Activated naive CD8-positive, alpha-beta T cell treated with anti-CD3 and anti-CD28 coated beads, Interleukin-2, amount 10 ng/mL, durations not matched to agents 7 days and 5 days (primary cell): ENCODE measurements at regions of chr14 and their contacts with region 1.

Region 1: GRCh38 chr14:22556990-22557623 is 31.9 kb downstream of the DAD1 start:
- DNase-seq: peak; percentile 97
- ATAC-seq: peak; percentile 19
- H3K4me3 Mint-ChIP-seq: peak overlapping the region; percentile 65
- H3K27ac Mint-ChIP-seq: peak overlapping the region; percentile 93
- H3K4me1 Mint-ChIP-seq: peaks cover 84% of the 10 kb centered on the region
- H3K27me3 Mint-ChIP-seq: no peaks in the 10 kb centered on the region

Region 2: DNA sequence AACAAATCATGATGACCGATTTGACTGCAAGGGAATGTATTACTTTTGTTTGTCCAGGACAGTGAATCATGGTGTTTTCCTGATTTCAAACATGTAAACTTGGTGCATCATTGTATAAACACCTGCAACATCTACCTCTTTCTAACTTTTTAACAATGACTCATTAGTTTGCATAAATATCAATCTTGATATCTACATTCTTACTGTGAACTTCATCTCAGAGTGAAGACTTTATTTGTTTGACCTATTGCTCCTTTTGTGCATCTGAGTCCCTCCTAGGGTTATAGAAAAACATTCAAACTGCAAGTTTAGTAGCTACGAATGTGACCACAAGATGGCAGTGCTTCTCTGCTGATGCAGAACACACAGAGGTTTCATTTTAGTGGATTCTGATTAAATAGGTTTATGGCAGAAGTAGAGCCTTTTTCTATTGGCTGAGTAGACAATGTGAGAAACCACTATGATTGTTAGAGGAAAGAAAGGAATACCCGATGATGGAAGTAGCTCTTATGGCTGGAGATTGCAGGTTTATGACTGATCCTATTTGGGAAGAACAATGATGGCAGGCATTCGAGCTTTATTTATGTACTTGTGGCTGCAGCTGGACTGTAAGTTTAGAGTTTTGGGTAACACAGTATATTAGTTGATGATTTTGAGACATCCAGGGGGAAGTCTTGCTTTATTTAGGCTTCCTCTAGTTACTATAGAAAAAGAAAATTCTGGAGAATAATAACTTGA is 639.2 kb before region 1 on chr14:
- POLR2A ChIA-PET with region 1: interaction called, 26 read pairs
- DNase-seq: no peak
- ATAC-seq: peak; percentile 59
- H3K4me3 Mint-ChIP-seq: peak overlapping the region; percentile 77
- H3K27ac Mint-ChIP-seq: peak overlapping the region; percentile 78
- H3K4me1 Mint-ChIP-seq: peaks cover 45% of the 10 kb centered on the region
- H3K27me3 Mint-ChIP-seq: no peaks in the 10 kb centered on the region

Region 3: GRCh38 chr14:22002860-22003309 is 554.2 kb before region 1 on chr14:
- POLR2A ChIA-PET with region 1: interaction called, 26 read pairs
- DNase-seq: peak; percentile 67
- ATAC-seq: peak; percentile 66
- H3K4me3 Mint-ChIP-seq: peak overlapping the region; percentile 82
- H3K27ac Mint-ChIP-seq: peak overlapping the region; percentile 86
- H3K4me1 Mint-ChIP-seq: peaks cover 15% of the 10 kb centered on the region
- H3K27me3 Mint-ChIP-seq: no peaks in the 10 kb centered on the region

Region 4: GRCh38 chr14:22531451-22532344 is 25.4 kb before region 1 on chr14:
- POLR2A ChIA-PET with region 1: interaction called, 452 read pairs
- DNase-seq: no peak
- ATAC-seq: peak; percentile 23
- H3K4me3 Mint-ChIP-seq: peak overlapping the region; percentile 82
- H3K27ac Mint-ChIP-seq: peak overlapping the region; percentile 88
- H3K4me1 Mint-ChIP-seq: peaks cover 87% of the 10 kb centered on the region
- H3K27me3 Mint-ChIP-seq: no peaks in the 10 kb centered on the region

Region 5: GRCh38 chr14:22579236-22579635 is 22.1 kb after region 1 on chr14:
- POLR2A ChIA-PET with region 1: no interaction called
- DNase-seq: no peak
- ATAC-seq: no peak
- H3K4me3 Mint-ChIP-seq: peak overlapping the region; percentile 33
- H3K27ac Mint-ChIP-seq: peak overlapping the region; percentile 27
- H3K4me1 Mint-ChIP-seq: peaks cover 46% of the 10 kb centered on the region
- H3K27me3 Mint-ChIP-seq: no peaks in the 10 kb centered on the region

Region 6: GRCh38 chr14:22589096-22589839 is 32.2 kb after region 1 on chr14 and contains the start of gene DAD1:
- POLR2A ChIA-PET with region 1: interaction called, 31 read pairs
- DNase-seq: peak; percentile 100
- ATAC-seq: peak; percentile 93
- H3K4me3 Mint-ChIP-seq: peak within 1 kb of the TSS; percentile 90
- H3K27ac Mint-ChIP-seq: peak within 1 kb of the TSS; percentile 100
- H3K4me1 Mint-ChIP-seq: peaks cover 44% of the 10 kb centered on the region
- H3K27me3 Mint-ChIP-seq: no peaks in the 10 kb centered on the region
- total RNA-seq, gene DAD1: 124 to 148 TPM